Activated CD4-positive, alpha-beta memory T cell treated with anti-CD3 and anti-CD28 coated beads, Interleukin-2, amount 10 ng/mL, durations not matched to agents 7 days and 5 days (primary cell): ENCODE measurements at regions of chr19 and their contacts with region 1.

Region 1: DNA sequence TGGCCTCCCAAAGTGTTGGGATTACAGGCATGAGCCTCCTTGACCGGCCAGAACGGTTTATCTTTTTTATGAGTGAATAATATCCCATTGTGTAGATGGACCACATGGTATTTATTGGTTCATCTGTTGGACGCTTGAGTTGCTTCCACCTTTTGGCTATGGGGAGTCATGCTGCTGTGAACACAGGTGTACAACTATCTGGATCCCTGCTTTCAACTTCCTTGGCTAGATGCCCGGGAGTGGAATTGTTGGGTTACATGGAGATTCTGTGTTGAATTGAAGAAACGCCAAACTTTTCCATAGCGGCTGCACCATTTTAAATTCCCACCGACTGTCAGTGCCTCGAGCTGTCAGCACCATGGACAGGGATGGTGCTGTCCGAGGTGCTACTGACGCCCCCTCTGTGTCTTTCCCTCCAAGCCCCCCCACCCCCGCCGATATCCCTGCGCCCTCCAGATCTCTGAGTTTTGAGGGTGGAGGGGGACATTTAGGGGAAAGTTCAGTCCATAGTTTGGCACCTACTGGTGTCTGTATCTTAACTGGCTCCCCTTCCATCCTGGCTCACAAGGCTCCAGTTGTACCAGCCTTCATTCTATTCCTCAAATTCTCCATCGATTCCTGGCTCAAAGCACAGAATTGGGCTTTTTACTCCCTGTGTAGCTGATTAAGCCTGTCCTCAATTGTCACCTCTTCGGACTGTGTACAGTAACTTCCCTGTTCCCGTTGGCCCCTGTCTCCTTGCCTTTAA is 27.3 kb downstream of the PNPLA6 start:
- DNase-seq: no peak
- H3K4me3 Mint-ChIP-seq: no peak overlapping the region
- H3K27ac Mint-ChIP-seq: no peak overlapping the region
- H3K4me1 Mint-ChIP-seq: peaks cover 3% of the 10 kb centered on the region
- H3K27me3 Mint-ChIP-seq: no peaks in the 10 kb centered on the region

Region 2: GRCh38 chr19:7376151-7376852 is 186.5 kb before region 1 on chr19:
- CTCF ChIA-PET with region 1: no interaction called
- POLR2A ChIA-PET with region 1: no interaction called
- DNase-seq: no peak
- H3K4me3 Mint-ChIP-seq: no peak overlapping the region
- H3K27ac Mint-ChIP-seq: no peak overlapping the region
- H3K4me1 Mint-ChIP-seq: peaks cover 3% of the 10 kb centered on the region
- H3K27me3 Mint-ChIP-seq: no peaks in the 10 kb centered on the region

Region 3: GRCh38 chr19:7522072-7522922 is 40.5 kb before region 1 on chr19 and contains the start of gene MCOLN1:
- CTCF ChIA-PET with region 1: interaction called, 26 read pairs
- POLR2A ChIA-PET with region 1: no interaction called
- DNase-seq: peak; percentile 100
- H3K4me3 Mint-ChIP-seq: peak within 1 kb of the TSS; percentile 83
- H3K27ac Mint-ChIP-seq: peak within 1 kb of the TSS; percentile 33
- H3K4me1 Mint-ChIP-seq: peaks cover 15% of the 10 kb centered on the region
- H3K27me3 Mint-ChIP-seq: peaks cover 3% of the 10 kb centered on the region
- total RNA-seq, gene MCOLN1: 15.2 to 15.3 TPM

Region 4: DNA sequence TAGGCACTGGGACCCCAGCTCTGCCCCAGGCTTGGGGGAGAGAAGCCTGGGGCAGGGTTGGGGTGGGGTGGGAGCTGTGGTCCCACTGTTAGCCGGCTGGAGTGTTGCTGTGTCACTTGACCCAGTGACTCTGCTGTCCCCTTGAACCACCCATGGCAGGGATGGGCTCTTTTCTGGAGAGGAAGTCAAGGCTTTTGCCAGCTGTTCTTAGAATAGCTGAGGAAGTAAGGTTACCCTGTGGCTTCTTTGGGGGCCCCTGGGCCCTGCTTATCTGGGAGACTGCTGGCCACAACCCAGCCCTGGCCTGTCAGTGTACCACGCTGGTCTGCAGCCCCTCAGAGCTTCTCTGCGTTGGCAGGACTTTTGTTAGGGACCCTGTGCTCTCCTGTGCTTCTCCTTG is 18.2 kb before region 1 on chr19:
- CTCF ChIA-PET with region 1: interaction called, 11 read pairs
- POLR2A ChIA-PET with region 1: interaction called, 3 read pairs
- DNase-seq: no peak
- H3K4me3 Mint-ChIP-seq: no peak overlapping the region
- H3K27ac Mint-ChIP-seq: peak overlapping the region; percentile 86
- H3K4me1 Mint-ChIP-seq: peaks cover 43% of the 10 kb centered on the region
- H3K27me3 Mint-ChIP-seq: no peaks in the 10 kb centered on the region

Region 5: DNA sequence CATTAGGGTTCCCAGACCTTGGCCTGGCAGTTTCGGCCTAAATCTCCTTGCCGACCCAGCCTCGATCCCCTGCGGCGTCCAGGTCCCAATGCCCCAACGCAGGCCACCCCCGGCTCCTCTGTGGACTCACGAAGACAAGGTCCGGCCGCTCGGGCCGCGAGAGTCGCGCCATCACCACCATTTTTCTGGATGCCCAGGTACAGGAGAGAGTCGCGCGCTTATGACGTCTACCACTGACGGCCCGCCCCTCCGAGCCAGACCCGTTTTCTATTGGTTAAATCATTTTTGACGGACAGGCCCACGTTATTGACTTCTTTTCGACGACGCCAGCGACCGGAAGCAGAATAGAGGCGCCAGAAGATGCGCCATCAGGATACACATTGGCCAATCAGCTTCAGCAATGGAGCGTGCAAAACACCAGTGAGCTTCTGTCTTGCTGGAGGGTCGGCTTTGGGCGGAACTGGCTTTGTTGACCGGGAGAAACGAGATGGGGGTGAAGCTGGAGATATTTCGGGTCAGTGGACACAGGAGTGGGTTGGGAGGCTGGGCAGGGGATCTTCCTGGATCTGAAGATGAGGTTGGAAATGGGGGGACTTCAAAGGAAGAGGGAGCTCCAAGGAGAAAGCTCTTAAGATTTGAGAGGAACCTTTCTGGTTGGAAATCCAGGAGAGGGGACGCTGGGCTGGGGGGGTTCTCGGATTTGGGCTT is 66.7 kb after region 1 on chr19 and contains the starts of genes PET100 and XAB2:
- CTCF ChIA-PET with region 1: interaction called, 26 read pairs
- POLR2A ChIA-PET with region 1: interaction called, 6 read pairs
- DNase-seq: peak; percentile 96
- H3K4me3 Mint-ChIP-seq: peak within 1 kb of the TSS; percentile 99
- H3K27ac Mint-ChIP-seq: peak within 1 kb of the TSS; percentile 99
- H3K4me1 Mint-ChIP-seq: peaks cover 37% of the 10 kb centered on the region
- H3K27me3 Mint-ChIP-seq: no peaks in the 10 kb centered on the region
- total RNA-seq, gene PET100: 123 to 136 TPM
- total RNA-seq, gene XAB2: 48.5 TPM

Region 6: DNA sequence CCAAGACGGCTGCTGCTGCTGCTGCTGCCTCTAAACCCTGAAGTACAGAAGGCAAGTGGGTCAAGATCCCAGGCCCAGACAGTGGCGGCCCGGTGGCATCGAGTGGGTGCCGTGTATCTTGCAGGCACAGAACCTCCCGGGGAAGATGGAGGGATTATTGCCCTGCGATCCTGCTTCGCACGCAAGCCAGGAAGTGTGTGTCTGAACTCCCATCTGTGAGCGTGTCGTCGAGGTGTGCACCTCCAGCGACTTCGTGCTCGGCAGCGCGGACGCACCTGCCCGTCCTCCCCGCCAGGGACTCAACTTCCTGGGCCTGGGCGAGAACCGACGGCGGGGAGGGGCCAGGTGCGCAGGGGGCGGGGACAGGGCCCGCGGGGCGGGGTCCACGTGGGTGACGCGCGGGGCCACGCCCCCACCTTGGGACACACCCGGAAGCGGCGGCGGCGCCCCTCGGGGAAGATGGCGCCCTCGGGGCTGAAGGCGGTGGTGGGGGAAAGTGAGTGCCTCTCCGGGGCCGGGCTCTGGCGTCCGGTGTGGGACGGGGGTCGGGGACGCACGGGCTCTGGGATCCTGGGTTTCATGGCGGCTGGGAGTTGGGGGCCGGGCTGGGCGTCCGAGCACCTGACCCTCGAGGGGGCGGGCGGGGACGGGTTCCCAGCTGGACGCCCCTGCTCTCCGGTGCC is 74.0 kb after region 1 on chr19 and contains the start of gene STXBP2:
- CTCF ChIA-PET with region 1: interaction called, 12 read pairs
- POLR2A ChIA-PET with region 1: no interaction called
- DNase-seq: peak; percentile 94
- H3K4me3 Mint-ChIP-seq: peak within 1 kb of the TSS; percentile 79
- H3K27ac Mint-ChIP-seq: peak within 1 kb of the TSS; percentile 84
- H3K4me1 Mint-ChIP-seq: peaks cover 38% of the 10 kb centered on the region
- H3K27me3 Mint-ChIP-seq: no peaks in the 10 kb centered on the region
- total RNA-seq, gene STXBP2: 169 to 171 TPM

Region 7: GRCh38 chr19:7799640-7800355 is 237.0 kb after region 1 on chr19:
- CTCF ChIA-PET with region 1: interaction called, 36 read pairs
- POLR2A ChIA-PET with region 1: no interaction called
- DNase-seq: peak; percentile 61
- H3K4me3 Mint-ChIP-seq: no peak overlapping the region
- H3K27ac Mint-ChIP-seq: no peak overlapping the region
- H3K4me1 Mint-ChIP-seq: peaks cover 1% of the 10 kb centered on the region
- H3K27me3 Mint-ChIP-seq: peaks cover 51% of the 10 kb centered on the region